CD4-positive, alpha-beta T cell (primary cell): ENCODE measurements at regions of chr1 and their contacts with region 1.

Region 1: GRCh38 chr1:223811634-223812415 is 33.9 kb downstream of the TP53BP2 start:
- DNase-seq: peak in 3 of 14 experiments; percentile 58 to 65 (median 64)
- ATAC-seq: peak; percentile 71
- H3K4me3 ChIP-seq: no peak overlapping the region
- H3K4me3 Mint-ChIP-seq: no peak overlapping the region
- H3K27ac ChIP-seq: no peak overlapping the region
- H3K27ac Mint-ChIP-seq: peak overlapping the region; percentile 35
- H3K4me1 ChIP-seq: peaks cover 15% of the 10 kb centered on the region
- H3K4me1 Mint-ChIP-seq: peaks cover 38% of the 10 kb centered on the region
- H3K27me3 ChIP-seq: no peaks in the 10 kb centered on the region
- H3K27me3 Mint-ChIP-seq: no peaks in the 10 kb centered on the region
- CTCF ChIP-seq: peak; percentile 73

Region 2: DNA sequence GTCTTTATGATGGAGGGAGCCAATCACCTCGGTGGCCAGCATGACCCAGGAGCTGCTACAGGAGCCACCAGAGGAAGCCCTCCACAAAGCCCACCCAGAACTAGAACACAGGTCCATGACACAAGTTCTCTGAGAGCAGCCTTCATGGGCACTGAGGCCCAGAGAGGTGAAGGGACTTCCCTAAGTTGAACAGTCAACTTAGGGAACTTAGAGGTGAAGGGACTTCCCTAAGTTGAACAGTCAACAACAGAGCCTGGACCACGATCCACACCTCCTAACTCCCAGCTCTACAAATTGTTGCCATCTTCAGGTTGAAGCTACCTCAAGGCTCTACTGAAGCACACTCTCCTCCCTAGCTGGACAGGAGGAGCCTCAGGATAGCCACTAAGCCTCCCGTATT is 285.9 kb before region 1 on chr1:
- CTCF ChIA-PET with region 1: no interaction called
- POLR2A ChIA-PET with region 1: no interaction called
- intact Hi-C with region 1: no loop called
- DNase-seq: peak in 1 of 14 experiments; percentile 11
- ATAC-seq: no peak
- H3K4me3 ChIP-seq: no peak overlapping the region
- H3K4me3 Mint-ChIP-seq: no peak overlapping the region
- H3K27ac ChIP-seq: no peak overlapping the region
- H3K27ac Mint-ChIP-seq: no peak overlapping the region
- H3K4me1 ChIP-seq: peaks cover 9% of the 10 kb centered on the region
- H3K4me1 Mint-ChIP-seq: peaks cover 8% of the 10 kb centered on the region
- H3K27me3 ChIP-seq: no peaks in the 10 kb centered on the region
- H3K27me3 Mint-ChIP-seq: no peaks in the 10 kb centered on the region
- CTCF ChIP-seq: no peak

Region 3: DNA sequence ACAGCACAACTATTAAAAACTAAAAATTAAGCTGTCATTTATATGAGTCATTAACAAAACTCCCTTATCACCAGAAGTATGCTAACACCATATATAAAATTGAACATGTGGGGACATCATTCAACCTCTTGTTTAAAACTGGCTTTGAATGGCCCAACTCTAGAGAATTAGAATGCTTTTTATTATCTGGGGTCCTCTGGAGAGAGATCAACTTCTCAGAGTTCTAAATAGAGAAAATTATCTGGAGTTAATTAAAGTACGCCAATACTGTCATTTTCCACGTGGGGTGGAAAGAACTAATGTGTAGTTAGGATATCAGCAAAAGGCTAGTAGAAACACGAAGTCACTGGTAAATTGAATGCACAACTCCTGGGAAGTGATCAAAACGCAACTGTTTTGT is 120.7 kb before region 1 on chr1:
- CTCF ChIA-PET with region 1: no interaction called
- POLR2A ChIA-PET with region 1: no interaction called
- intact Hi-C with region 1: no loop called
- DNase-seq: no peak
- ATAC-seq: no peak
- H3K4me3 ChIP-seq: no peak overlapping the region
- H3K4me3 Mint-ChIP-seq: no peak overlapping the region
- H3K27ac ChIP-seq: no peak overlapping the region
- H3K27ac Mint-ChIP-seq: no peak overlapping the region
- H3K4me1 ChIP-seq: no peaks in the 10 kb centered on the region
- H3K4me1 Mint-ChIP-seq: no peaks in the 10 kb centered on the region
- H3K27me3 ChIP-seq: no peaks in the 10 kb centered on the region
- H3K27me3 Mint-ChIP-seq: peaks cover 6% of the 10 kb centered on the region
- CTCF ChIP-seq: no peak

Region 4: GRCh38 chr1:223765036-223765718 is 46.6 kb before region 1 on chr1:
- CTCF ChIA-PET with region 1: no interaction called
- POLR2A ChIA-PET with region 1: no interaction called
- intact Hi-C with region 1: no loop called
- DNase-seq: no peak
- ATAC-seq: no peak
- H3K4me3 ChIP-seq: no peak overlapping the region
- H3K4me3 Mint-ChIP-seq: no peak overlapping the region
- H3K27ac ChIP-seq: no peak overlapping the region
- H3K27ac Mint-ChIP-seq: no peak overlapping the region
- H3K4me1 ChIP-seq: no peaks in the 10 kb centered on the region
- H3K4me1 Mint-ChIP-seq: no peaks in the 10 kb centered on the region
- H3K27me3 ChIP-seq: no peaks in the 10 kb centered on the region
- H3K27me3 Mint-ChIP-seq: no peaks in the 10 kb centered on the region
- CTCF ChIP-seq: no peak

Region 5: DNA sequence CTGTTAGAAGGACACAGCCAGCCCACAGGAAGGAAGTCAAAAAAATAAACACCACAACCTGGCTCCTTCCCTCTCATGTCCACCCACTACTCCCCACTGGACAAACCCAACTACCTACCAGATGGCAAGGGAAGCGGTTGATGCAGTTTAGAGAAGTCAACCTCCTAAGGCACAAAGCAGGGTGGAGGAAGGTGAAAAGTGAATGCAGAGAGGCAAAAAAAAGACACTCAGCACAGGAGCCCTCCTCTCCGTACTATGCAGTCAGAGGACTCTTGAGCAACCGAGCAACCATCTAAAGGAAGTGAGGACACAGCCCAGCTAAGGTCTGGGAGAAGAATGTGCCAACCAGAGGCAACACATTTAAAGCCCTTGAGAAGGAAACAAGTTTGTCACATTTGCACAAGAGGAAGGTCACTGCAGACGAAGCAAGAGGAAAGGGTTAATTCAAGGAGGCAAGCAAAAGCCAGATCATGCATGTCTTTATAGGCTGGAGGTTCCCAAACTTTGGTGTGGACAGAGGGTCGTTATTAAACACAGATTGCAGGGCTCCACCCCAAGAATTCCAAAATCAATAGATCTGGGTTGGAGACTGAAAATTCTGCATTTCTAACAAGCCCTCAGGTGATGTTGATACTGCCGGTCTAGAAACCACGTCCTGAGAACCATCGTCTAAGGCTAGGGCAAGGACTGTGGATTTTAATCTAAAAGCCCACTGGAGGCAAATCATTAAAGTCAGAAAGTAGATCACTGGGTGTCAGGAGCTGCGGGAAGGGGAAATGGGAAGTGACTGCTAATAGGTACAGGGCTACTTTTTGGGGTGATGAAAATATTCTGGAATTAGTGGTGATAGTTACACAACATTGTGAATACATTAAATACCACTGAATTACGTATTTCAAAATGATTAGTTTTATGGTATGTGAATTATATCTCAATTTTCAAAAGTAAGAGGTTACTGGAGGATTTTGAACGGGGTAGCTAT is 14.2 kb after region 1 on chr1:
- CTCF ChIA-PET with region 1: interaction called, 10 read pairs
- POLR2A ChIA-PET with region 1: interaction called, 11 read pairs
- intact Hi-C with region 1: no loop called
- DNase-seq: peak in 2 of 14 experiments; percentile 42 to 47
- ATAC-seq: peak; percentile 26
- H3K4me3 ChIP-seq: no peak overlapping the region
- H3K4me3 Mint-ChIP-seq: no peak overlapping the region
- H3K27ac ChIP-seq: no peak overlapping the region
- H3K27ac Mint-ChIP-seq: no peak overlapping the region
- H3K4me1 ChIP-seq: peaks cover 21% of the 10 kb centered on the region
- H3K4me1 Mint-ChIP-seq: peaks cover 76% of the 10 kb centered on the region
- H3K27me3 ChIP-seq: no peaks in the 10 kb centered on the region
- H3K27me3 Mint-ChIP-seq: no peaks in the 10 kb centered on the region
- CTCF ChIP-seq: no peak

Region 6: DNA sequence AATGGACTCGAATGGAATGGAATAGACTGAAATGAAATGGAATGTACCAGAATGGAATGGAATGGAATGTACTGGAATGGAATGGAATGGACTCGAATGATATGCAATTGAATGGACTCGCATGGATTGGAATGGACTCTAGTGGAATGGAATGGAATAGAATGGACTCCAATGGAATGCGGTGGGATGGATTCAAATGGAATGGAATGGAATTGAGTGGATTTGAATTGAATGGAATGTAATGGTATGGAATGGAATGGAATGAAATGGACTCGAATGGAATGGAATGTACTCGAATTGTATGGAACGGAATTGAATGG is 202.5 kb after region 1 on chr1:
- CTCF ChIA-PET with region 1: no interaction called
- POLR2A ChIA-PET with region 1: no interaction called
- intact Hi-C with region 1: loop called in 1 of 2 experiments (anchors 10 kb)
- DNase-seq: no peak
- ATAC-seq: no peak
- H3K4me3 ChIP-seq: no peak overlapping the region
- H3K4me3 Mint-ChIP-seq: no peak overlapping the region
- H3K27ac ChIP-seq: no peak overlapping the region
- H3K27ac Mint-ChIP-seq: no peak overlapping the region
- H3K4me1 ChIP-seq: no peaks in the 10 kb centered on the region
- H3K4me1 Mint-ChIP-seq: no peaks in the 10 kb centered on the region
- H3K27me3 ChIP-seq: no peaks in the 10 kb centered on the region
- H3K27me3 Mint-ChIP-seq: no peaks in the 10 kb centered on the region
- CTCF ChIP-seq: no peak

Region 7: GRCh38 chr1:224051086-224051406 is 239.2 kb after region 1 on chr1:
- CTCF ChIA-PET with region 1: no interaction called
- POLR2A ChIA-PET with region 1: interaction called, 5 read pairs
- intact Hi-C with region 1: loop called in 1 of 2 experiments (anchors 2 kb)
- DNase-seq: no peak
- ATAC-seq: no peak
- H3K4me3 ChIP-seq: no peak overlapping the region
- H3K4me3 Mint-ChIP-seq: no peak overlapping the region
- H3K27ac ChIP-seq: no peak overlapping the region
- H3K27ac Mint-ChIP-seq: no peak overlapping the region
- H3K4me1 ChIP-seq: peaks cover 2% of the 10 kb centered on the region
- H3K4me1 Mint-ChIP-seq: peaks cover 4% of the 10 kb centered on the region
- H3K27me3 ChIP-seq: peaks cover 0 to 4% of the 10 kb centered on the region in 2 experiments
- H3K27me3 Mint-ChIP-seq: peaks cover 23% of the 10 kb centered on the region
- CTCF ChIP-seq: no peak